Activated CD4-positive, alpha-beta T cell treated with anti-CD3 and anti-CD28 coated beads, Interleukin-2, amount 10 ng/mL, durations not matched to agents 24 days and 14 days (primary cell): ENCODE measurements at regions of chrX and their contacts with region 1.

Region 1: GRCh38 chrX:79146640-79147390 is 2.3 kb downstream of the GPR174 start:
- DNase-seq: peak; percentile 71
- H3K4me3 Mint-ChIP-seq: peak overlapping the region; percentile 88
- H3K27ac Mint-ChIP-seq: peak overlapping the region; percentile 96
- H3K4me1 Mint-ChIP-seq: peaks cover 26% of the 10 kb centered on the region
- H3K27me3 Mint-ChIP-seq: no peaks in the 10 kb centered on the region

Region 2: DNA sequence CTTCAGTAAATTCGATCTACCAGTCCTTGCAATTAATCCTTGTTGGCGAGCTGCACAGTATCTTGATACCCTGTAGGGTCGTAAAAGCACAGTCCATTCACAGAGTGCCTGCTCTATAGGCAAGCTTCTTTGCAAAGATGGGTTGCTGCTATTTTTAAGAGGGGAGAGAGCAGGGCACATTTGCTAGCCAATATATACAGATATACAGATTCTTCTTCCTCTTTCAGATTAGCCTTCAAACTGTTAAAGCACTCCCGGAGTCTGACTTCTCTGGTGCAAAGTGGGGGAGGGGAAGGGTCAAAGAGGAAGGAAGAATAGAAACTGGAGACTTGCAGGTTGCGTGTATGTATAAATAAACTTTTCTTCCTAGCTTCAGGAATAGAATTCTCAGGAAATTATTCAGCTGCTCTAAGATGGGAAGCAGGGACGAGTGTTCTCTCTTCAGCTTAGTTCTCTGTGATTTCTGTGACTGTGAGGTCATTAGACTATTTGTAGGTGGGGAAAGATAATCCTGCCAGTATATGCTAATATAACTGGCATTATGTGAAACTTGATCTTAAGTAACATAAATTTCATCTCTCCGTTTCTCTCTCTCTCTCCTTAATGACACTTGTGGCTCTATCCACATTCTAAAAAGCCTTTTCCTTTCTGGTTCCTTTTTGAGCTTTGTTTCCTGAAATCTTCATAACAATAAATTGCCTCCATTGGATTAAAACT is 819.3 kb before region 1 on chrX and contains the start of gene CYSLTR1:
- intact Hi-C with region 1: loop called (anchors 5 kb)
- DNase-seq: peak; percentile 69
- H3K4me3 Mint-ChIP-seq: peak within 1 kb of the TSS; percentile 75
- H3K27ac Mint-ChIP-seq: peak within 1 kb of the TSS; percentile 90
- H3K4me1 Mint-ChIP-seq: peaks cover 52% of the 10 kb centered on the region
- H3K27me3 Mint-ChIP-seq: no peaks in the 10 kb centered on the region
- total RNA-seq, gene CYSLTR1: 16.1 and 17.2 TPM in 2 replicates

Region 3: DNA sequence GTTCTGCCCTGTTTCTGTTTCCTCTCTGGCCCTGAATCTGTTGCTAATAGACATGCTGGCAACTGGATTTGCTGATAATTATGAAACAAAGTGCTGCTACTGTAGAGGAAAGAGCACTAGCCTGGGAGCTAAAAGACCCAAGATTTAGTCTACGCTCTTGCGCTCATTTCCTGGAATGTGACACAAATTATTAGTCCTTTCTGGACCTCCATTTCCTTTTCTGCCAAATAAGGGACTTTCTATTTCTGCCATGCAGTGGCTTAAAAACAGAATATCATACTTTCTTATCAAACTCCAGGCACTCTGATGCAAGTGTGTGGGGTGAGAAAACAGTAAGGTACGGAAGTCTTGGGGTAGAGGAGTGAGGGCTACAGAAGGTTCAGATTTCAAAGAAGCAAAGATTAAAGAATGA is 50.7 kb before region 1 on chrX:
- intact Hi-C with region 1: loop called (anchors 2 kb)
- DNase-seq: no peak
- H3K4me3 Mint-ChIP-seq: peak overlapping the region; percentile 76
- H3K27ac Mint-ChIP-seq: peak overlapping the region; percentile 92
- H3K4me1 Mint-ChIP-seq: peaks cover 39% of the 10 kb centered on the region
- H3K27me3 Mint-ChIP-seq: no peaks in the 10 kb centered on the region

Region 4: GRCh38 chrX:79107891-79108718 is 38.7 kb before region 1 on chrX:
- intact Hi-C with region 1: loop called (anchors 2 kb)
- DNase-seq: peak; percentile 60
- H3K4me3 Mint-ChIP-seq: peak overlapping the region; percentile 65
- H3K27ac Mint-ChIP-seq: peak overlapping the region; percentile 95
- H3K4me1 Mint-ChIP-seq: peaks cover 28% of the 10 kb centered on the region
- H3K27me3 Mint-ChIP-seq: no peaks in the 10 kb centered on the region

Region 5: GRCh38 chrX:79161655-79162054 is 14.8 kb after region 1 on chrX:
- intact Hi-C with region 1: loop called (anchors 1 kb)
- DNase-seq: peak; percentile 85
- H3K4me3 Mint-ChIP-seq: peak overlapping the region; percentile 82
- H3K27ac Mint-ChIP-seq: peak overlapping the region; percentile 98
- H3K4me1 Mint-ChIP-seq: peaks cover 40% of the 10 kb centered on the region
- H3K27me3 Mint-ChIP-seq: no peaks in the 10 kb centered on the region

Region 6: GRCh38 chrX:79182616-79183015 is 35.8 kb after region 1 on chrX:
- intact Hi-C with region 1: loop called (anchors 1 kb)
- DNase-seq: peak; percentile 57
- H3K4me3 Mint-ChIP-seq: peak overlapping the region; percentile 60
- H3K27ac Mint-ChIP-seq: peak overlapping the region; percentile 88
- H3K4me1 Mint-ChIP-seq: peaks cover 26% of the 10 kb centered on the region
- H3K27me3 Mint-ChIP-seq: no peaks in the 10 kb centered on the region

Region 7: DNA sequence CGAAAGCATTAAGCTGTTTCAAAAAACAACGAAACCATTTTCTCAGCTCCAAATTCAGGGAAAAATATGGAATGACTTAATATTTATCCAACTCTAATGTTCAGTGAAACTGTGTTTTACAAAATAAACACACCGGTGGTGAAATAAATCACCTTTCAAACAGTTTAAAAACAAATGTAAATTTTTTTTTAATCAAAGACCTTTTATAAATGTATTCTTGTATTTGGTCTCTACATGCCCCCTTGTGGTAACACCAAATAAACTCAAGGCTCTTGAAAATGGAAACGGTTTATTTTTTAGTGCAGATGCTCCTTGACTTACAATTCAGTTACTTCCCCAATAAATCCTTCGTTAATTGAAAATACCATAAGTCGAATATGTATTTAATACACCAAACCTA is 266.2 kb after region 1 on chrX:
- intact Hi-C with region 1: loop called (anchors 10 kb)
- DNase-seq: no peak
- H3K4me3 Mint-ChIP-seq: peak overlapping the region; percentile 69
- H3K27ac Mint-ChIP-seq: peak overlapping the region; percentile 53
- H3K4me1 Mint-ChIP-seq: peaks cover 18% of the 10 kb centered on the region
- H3K27me3 Mint-ChIP-seq: no peaks in the 10 kb centered on the region